ENCODE measurements at regions of chr10 and their contacts with region 1.

Region 1: GRCh38 chr10:43204943-43205671 is 61.8 kb downstream of the RASGEF1A start:
- DNase-seq: peak; percentile 76 to 83 (median 82)
- H3K4me3 ChIP-seq: no peak overlapping the region
- H3K27ac ChIP-seq: no peak overlapping the region
- H3K4me1 ChIP-seq: peaks cover 0 to 24% (median 20%) of the 10 kb centered on the region in 4 experiments
- H3K27me3 ChIP-seq: no peaks in the 10 kb centered on the region

Region 2: GRCh38 chr10:43076876-43077420 is 128.2 kb before region 1 on chr10 and contains the start of gene RET:
- CTCF ChIA-PET with region 1: no interaction called
- POLR2A ChIA-PET with region 1: no interaction called
- DNase-seq: peak; percentile 25 to 66 (median 59)
- H3K4me3 ChIP-seq: peak within 1 kb of the TSS in 6 of 7 experiments; percentile 52 to 74 (median 60)
- H3K27ac ChIP-seq: no peak within 1 kb of the TSS
- H3K4me1 ChIP-seq: peaks cover 0 to 56% (median 45%) of the 10 kb centered on the region in 4 experiments
- H3K27me3 ChIP-seq: peaks cover 0 to 42% (median 25%) of the 10 kb centered on the region in 5 experiments

Region 3: GRCh38 chr10:43138021-43138756 is 66.9 kb before region 1 on chr10 and contains the start of gene CSGALNACT2:
- CTCF ChIA-PET with region 1: interaction called, 5 read pairs
- POLR2A ChIA-PET with region 1: interaction called, 16 read pairs
- DNase-seq: peak; percentile 87 to 97 (median 95)
- H3K4me3 ChIP-seq: peak within 1 kb of the TSS; percentile 78 to 96 (median 90)
- H3K27ac ChIP-seq: peak within 1 kb of the TSS; percentile 83 to 87
- H3K4me1 ChIP-seq: peaks cover 19 to 67% (median 43%) of the 10 kb centered on the region in 4 experiments
- H3K27me3 ChIP-seq: no peaks in the 10 kb centered on the region

Region 4: GRCh38 chr10:43193496-43194080 is 11.5 kb before region 1 on chr10:
- CTCF ChIA-PET with region 1: interaction called, 17 read pairs
- POLR2A ChIA-PET with region 1: no interaction called
- DNase-seq: no peak
- H3K4me3 ChIP-seq: no peak overlapping the region
- H3K27ac ChIP-seq: no peak overlapping the region
- H3K4me1 ChIP-seq: no peaks in the 10 kb centered on the region
- H3K27me3 ChIP-seq: no peaks in the 10 kb centered on the region

Region 5: DNA sequence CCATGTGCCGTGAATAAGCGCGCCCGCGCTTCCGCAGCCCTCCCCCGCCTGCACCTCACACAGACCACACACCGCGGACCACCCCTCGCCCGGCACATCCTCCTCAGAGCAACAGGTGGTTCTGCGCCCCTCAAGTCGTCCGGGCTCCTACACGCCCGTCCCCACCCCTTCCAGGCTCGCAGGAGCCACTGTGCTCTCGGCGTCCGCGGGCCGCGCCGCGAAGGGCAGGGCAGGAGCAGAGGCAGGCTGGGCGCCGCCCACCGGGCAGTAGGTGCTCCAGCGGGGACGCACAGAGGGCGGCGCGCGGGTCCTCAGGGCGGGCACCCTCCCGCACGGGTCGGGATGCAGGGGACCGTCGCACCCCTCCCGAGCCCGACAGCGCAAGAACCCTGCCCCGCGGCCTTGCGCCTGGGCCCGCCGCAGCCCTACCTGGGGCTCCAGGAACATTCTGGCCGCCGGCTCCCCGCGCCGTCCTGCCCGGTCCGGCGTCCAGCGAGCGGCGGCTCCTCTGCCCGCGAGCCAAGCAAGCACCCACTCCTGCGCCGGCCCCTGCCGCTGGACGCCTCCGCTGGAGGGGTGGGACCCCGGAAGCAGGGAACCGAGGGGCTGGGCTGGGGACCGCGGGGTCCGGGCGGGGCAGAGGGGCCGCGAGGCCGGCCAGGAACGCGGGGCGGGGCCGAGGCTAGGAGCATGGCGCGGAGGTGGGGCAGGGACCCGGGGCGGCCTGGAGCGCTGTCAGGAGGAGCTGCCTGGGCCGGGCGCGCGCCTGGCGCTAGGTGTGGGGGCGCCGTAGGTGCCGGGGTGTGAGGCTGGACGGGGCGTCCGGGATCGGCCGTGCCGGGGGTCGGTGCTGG is 24.3 kb after region 1 on chr10:
- CTCF ChIA-PET with region 1: interaction called, 31 read pairs
- POLR2A ChIA-PET with region 1: no interaction called
- DNase-seq: peak; percentile 25 to 71 (median 69)
- H3K4me3 ChIP-seq: peak overlapping the region in 6 of 7 experiments; percentile 42 to 65 (median 47)
- H3K27ac ChIP-seq: no peak overlapping the region
- H3K4me1 ChIP-seq: peaks cover 0 to 37% (median 34%) of the 10 kb centered on the region in 4 experiments
- H3K27me3 ChIP-seq: peaks cover 0 to 33% (median 4%) of the 10 kb centered on the region in 5 experiments